AG04450 (cell line): ENCODE measurements at regions of chr15 and their contacts with region 1.

Region 1: GRCh38 chr15:72591361-72591760 is 63.1 kb upstream of the GOLGA6B start:
- DNase-seq: peak; percentile 21
- H3K4me3 ChIP-seq: no peak overlapping the region
- H3K27ac ChIP-seq: no peak overlapping the region
- H3K27me3 ChIP-seq: no peaks in the 10 kb centered on the region
- CTCF ChIP-seq: no peak

Region 2: GRCh38 chr15:72421484-72421883 is 169.9 kb before region 1 on chr15:
- CTCF ChIA-PET with region 1: no interaction called
- POLR2A ChIA-PET with region 1: interaction called, 10 read pairs
- DNase-seq: no peak
- H3K4me3 ChIP-seq: no peak overlapping the region
- H3K27ac ChIP-seq: no peak overlapping the region
- H3K27me3 ChIP-seq: peaks cover 2% of the 10 kb centered on the region
- CTCF ChIP-seq: no peak

Region 3: DNA sequence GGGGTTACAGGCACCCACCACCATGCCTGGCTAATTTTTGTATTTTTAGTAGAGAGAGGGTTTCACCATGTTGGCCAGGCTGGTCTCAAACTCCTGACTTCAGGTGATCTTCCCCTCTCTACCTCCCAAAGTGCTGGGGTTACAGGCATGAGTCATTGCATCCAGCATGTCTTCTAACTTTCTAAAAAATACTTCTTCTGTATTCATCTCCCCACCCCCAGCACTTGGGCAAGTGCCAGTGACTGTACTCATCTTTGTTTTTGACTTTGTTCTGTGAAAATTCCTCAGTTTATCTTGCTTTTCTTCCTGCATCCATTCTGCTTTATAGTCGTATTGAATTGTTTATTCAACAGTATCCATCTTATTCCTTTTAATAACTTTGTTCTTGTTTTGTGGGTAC is 69.7 kb before region 1 on chr15:
- CTCF ChIA-PET with region 1: no interaction called
- POLR2A ChIA-PET with region 1: no interaction called
- DNase-seq: no peak
- H3K4me3 ChIP-seq: no peak overlapping the region
- H3K27ac ChIP-seq: no peak overlapping the region
- H3K27me3 ChIP-seq: no peaks in the 10 kb centered on the region
- CTCF ChIP-seq: no peak

Region 4: GRCh38 chr15:72579814-72580213 is 11.5 kb before region 1 on chr15:
- CTCF ChIA-PET with region 1: no interaction called
- POLR2A ChIA-PET with region 1: no interaction called
- DNase-seq: no peak
- H3K4me3 ChIP-seq: no peak overlapping the region
- H3K27ac ChIP-seq: no peak overlapping the region
- H3K27me3 ChIP-seq: no peaks in the 10 kb centered on the region
- CTCF ChIP-seq: no peak

Region 5: DNA sequence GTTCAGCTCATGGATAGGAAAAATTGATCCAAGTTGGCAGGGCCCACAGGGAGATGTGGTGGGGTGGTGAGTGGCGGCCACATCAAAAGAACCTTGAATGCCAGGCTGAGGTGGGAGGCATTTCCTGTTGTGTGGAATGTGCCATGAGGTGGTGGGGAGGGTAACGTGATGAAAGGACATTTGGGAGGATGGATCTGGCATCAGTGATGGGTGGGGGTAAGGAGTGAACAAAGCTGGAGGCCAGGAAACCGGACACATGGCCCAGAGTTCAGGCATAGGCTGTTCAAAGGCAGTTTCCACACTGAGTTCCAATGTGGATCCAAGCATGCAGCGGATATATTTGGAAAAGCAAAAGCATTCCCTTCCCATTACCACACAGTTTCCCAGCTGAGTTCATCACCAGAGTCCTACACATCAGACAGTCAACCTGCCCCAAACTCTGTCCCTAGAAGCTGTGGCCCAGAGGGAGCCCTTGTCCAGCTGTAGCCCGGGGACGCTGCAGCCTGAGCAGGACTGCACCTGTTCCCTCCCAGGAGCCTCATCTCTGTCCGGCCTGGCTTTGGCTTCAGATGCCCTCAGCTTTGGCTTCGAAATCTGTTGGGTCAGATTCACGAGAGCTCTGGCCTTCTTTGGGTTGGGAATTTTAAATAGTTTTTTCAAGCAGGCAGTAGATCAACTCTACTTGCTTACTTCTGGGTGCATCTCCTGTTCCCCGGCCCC is 25.3 kb after region 1 on chr15:
- CTCF ChIA-PET with region 1: no interaction called
- POLR2A ChIA-PET with region 1: no interaction called
- DNase-seq: no peak
- H3K4me3 ChIP-seq: no peak overlapping the region
- H3K27ac ChIP-seq: no peak overlapping the region
- H3K27me3 ChIP-seq: peaks cover 6% of the 10 kb centered on the region
- CTCF ChIP-seq: no peak

Region 6: DNA sequence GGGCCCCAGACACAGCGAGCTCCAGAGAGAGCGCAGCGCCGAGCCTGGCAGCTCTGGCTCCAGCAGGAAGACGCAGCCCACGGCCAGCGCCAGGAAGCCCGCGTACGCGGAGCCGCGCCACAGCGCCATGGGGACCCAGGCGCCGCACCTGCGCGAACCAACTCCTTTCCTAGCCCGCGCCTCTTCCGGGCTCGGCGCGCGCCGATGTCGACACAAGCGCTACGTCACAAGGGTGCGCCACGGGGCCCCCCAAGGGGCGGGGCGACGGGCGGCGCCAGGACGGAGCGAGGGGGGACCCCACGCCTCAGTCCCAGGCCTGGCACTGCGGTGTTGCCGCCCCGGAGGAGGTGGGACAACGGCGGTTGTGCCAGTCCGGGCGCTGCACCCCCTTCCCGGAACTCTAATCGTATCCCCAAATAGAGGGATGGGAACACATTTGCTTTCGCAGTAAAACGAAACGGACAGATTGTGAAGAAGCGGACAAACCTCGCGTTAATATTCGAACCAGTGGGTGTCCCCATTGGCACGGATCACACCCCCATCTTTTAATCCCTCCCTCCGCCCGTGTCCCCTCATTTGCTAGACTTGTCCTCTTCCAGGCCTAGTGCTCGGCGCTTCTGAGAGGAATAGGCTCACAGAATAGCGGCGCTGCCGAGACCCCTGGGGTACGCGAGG is 192.3 kb after region 1 on chr15 and contains the start of gene ADPGK:
- CTCF ChIA-PET with region 1: no interaction called
- POLR2A ChIA-PET with region 1: no interaction called
- DNase-seq: peak; percentile 72
- H3K4me3 ChIP-seq: peak within 1 kb of the TSS; percentile 94
- H3K27ac ChIP-seq: peak within 1 kb of the TSS; percentile 93
- H3K27me3 ChIP-seq: no peaks in the 10 kb centered on the region
- CTCF ChIP-seq: no peak
- polyA plus RNA-seq, gene ADPGK: 61.1 and 74.3 TPM in 2 replicates